A549 (cell line): ENCODE measurements at regions of chr17 and their contacts with region 1.

Region 1: DNA sequence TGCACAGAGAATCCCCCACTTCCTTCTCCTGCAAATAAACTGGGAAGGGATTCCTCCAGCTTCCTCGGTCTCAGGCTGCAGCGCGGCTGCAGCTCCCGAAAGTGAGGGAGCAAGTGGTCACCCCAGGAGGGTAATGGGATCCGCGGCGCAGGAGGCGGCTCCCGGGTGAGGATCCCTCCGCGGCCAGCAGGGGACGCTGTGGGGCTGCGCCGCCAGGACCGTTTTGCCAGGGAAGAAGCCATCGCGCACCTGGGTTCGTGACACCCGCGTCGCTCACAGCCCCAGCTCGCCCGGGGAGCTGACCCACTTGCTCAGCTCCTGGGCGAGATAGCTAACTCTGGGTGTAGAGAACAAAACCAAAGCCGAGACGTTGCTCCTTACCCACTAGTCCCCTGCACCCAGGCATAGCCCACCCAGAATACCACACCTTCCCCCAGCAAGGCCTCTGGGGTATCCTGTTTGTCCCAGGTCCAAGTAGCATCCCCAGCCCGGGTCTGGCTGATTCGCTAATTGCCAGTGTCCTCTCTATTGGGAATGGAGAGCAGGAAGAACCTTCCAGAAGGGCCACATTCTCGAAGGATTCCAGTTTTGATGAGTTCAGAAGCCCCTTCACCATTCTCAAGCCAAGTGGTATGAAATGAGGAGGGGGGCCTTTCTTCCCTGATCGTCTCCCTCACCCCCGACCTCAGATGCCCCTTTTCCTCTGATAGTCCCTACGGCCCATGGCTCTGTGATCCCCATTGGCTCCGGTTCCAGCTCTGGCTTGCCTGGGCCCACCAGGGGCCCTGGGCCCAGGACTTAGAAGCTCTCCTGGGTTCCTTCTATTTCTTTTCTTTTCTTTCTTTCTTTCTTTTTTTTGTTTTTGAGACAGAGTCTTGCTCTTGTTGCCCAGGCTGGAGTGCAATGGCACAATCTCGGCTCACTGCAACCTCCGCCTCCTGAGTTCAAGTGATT is 14.1 kb downstream of the CYGB start:
- DNase-seq: peak; percentile 75 to 93
- ATAC-seq: peak; percentile 79 to 88
- H3K4me3 ChIP-seq: no peak overlapping the region
- H3K27ac ChIP-seq: peak overlapping the region in 1 of 2 experiments; percentile 47; a peak in 1 of 6 replicates
- H3K4me1 ChIP-seq: peaks cover 20% of the 10 kb centered on the region
- CTCF ChIP-seq: peak; percentile 100
- EP300 ChIP-seq: no peak
- POLR2A ChIP-seq: no peak
- RAD21 ChIP-seq: peak; percentile 97 to 99

Region 2: DNA sequence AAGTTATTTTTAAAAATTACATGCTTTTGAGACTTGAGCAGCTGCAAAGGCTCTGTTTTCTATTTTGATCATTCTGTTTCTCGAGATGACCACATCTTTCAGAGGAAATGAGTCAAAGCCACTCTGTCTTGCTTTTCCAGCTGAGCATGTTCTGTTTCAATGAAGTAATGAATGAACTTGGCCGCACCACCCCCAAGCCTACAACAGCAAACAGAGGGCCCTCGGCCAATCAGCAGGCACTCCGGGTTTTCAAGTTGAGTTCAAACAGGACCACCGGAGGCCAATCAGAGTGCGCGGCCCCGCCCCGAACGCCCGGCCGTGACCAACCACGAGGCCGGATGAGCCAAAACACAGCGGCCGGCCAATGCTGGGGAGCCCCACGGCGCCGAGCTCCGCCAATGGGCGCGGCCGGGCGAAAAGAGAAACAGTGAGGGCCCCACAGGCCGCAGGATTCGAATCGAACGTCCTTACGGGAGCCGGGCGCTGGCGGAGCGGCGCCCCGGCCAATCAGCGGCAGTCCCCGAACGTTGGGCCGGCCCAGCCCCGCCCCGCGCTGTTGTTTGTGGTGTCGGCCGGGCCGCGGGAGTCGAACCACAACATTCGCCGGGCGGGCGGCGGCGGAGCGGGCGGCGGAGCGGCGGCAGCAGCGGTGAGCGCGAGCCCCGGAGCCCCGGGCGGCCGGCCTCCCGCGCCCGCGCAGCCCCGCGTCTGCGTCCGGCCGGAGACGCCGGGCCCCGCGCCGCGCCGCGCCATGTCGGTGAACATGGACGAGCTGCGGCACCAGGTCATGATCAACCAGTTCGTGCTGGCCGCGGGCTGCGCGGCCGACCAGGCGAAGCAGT is 258.4 kb before region 1 on chr17 and contains the start of gene UBALD2:
- CTCF ChIA-PET with region 1: no interaction called
- POLR2A ChIA-PET with region 1: no interaction called
- DNase-seq: peak; percentile 100
- ATAC-seq: peak; percentile 92 to 98
- H3K4me3 ChIP-seq: peak within 1 kb of the TSS; percentile 99
- H3K27ac ChIP-seq: peak within 1 kb of the TSS; percentile 89 to 92
- H3K4me1 ChIP-seq: peaks cover 25% of the 10 kb centered on the region
- CTCF ChIP-seq: no peak
- EP300 ChIP-seq: no peak
- POLR2A ChIP-seq: peak; percentile 21; the same call in 1 of the 2 replicates
- RAD21 ChIP-seq: no peak
- polyA plus RNA-seq, gene UBALD2: 13.8 and 21.5 TPM in 2 replicates

Region 3: GRCh38 chr17:76278952-76279741 is 244.2 kb before region 1 on chr17:
- CTCF ChIA-PET with region 1: no interaction called
- POLR2A ChIA-PET with region 1: no interaction called
- DNase-seq: peak; percentile 78 to 96
- ATAC-seq: peak; percentile 75 to 97
- H3K4me3 ChIP-seq: no peak overlapping the region
- H3K27ac ChIP-seq: peak overlapping the region; percentile 3; a peak in 2 of 6 replicates
- H3K4me1 ChIP-seq: peaks cover 10% of the 10 kb centered on the region
- CTCF ChIP-seq: peak; percentile 100
- EP300 ChIP-seq: no peak
- POLR2A ChIP-seq: no peak
- RAD21 ChIP-seq: peak; percentile 99

Region 4: GRCh38 chr17:76365256-76365903 is 158.0 kb before region 1 on chr17:
- CTCF ChIA-PET with region 1: no interaction called
- POLR2A ChIA-PET with region 1: no interaction called
- DNase-seq: no peak
- ATAC-seq: peak; percentile 48 to 79; a peak in 3 of 6 replicates
- H3K4me3 ChIP-seq: no peak overlapping the region
- H3K27ac ChIP-seq: no peak overlapping the region
- H3K4me1 ChIP-seq: no peaks in the 10 kb centered on the region
- CTCF ChIP-seq: peak; percentile 58
- EP300 ChIP-seq: no peak
- POLR2A ChIP-seq: no peak
- RAD21 ChIP-seq: peak in 1 of 2 experiments; percentile 58; a peak in 2 of 5 replicates

Region 5: DNA sequence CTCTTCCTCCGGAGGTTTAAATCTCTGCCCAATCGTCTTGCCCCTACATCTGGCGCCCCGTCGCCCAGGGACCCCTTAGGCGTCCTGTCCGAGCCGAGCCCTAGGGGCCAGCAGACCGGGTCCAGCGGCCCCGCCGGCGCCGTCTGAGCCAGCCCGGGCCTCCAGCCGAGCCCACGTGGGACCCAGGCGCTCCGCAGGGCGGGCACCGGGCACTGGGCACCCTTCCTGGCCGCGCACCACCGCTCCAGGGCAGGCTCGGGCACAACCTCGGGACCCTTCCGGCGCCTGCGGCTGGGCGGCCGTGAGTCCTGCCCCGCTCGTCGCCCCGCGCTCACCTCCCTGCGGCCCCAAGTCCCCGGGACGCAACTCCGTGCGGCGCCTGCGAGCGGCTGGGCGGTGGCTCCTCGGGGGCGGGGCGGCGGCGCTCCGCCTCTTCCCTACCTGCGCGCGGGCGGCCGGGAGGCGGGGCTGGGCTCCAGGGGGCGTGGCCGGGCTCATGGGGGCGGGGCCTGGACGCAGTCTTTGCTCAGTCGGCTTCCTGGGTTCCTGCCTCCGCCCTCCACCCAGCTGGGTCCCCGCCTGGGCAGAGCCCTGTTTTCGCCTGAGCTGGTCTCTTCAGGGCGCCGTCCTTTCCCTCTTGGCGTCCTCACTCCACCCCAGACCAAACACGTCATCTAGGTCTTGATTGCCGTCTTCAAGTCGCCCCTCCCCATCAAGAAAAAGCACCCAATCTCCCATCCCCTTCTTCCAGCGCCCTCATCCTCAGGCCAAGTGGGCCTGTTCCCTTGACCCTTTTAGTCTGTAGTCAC is 22.1 kb before region 1 on chr17 and contains the start of gene RHBDF2:
- CTCF ChIA-PET with region 1: interaction called, 199 read pairs
- POLR2A ChIA-PET with region 1: interaction called, 6 read pairs
- DNase-seq: peak; percentile 87 to 97
- ATAC-seq: peak; percentile 73 to 81
- H3K4me3 ChIP-seq: peak within 1 kb of the TSS; percentile 81
- H3K27ac ChIP-seq: peak within 1 kb of the TSS; percentile 83 to 96
- H3K4me1 ChIP-seq: peaks cover 41% of the 10 kb centered on the region
- CTCF ChIP-seq: no peak
- EP300 ChIP-seq: no peak
- POLR2A ChIP-seq: peak; percentile 82
- RAD21 ChIP-seq: no peak
- polyA plus RNA-seq, gene RHBDF2: 14.0 and 19.9 TPM in 2 replicates

Region 6: GRCh38 chr17:76557368-76558197 is 34.2 kb after region 1 on chr17:
- CTCF ChIA-PET with region 1: interaction called, 185 read pairs
- POLR2A ChIA-PET with region 1: interaction called, 3 read pairs
- DNase-seq: peak; percentile 84 to 99
- ATAC-seq: peak; percentile 96
- H3K4me3 ChIP-seq: peak overlapping the region; percentile 87
- H3K27ac ChIP-seq: peak overlapping the region; percentile 90 to 96
- H3K4me1 ChIP-seq: peaks cover 39% of the 10 kb centered on the region
- CTCF ChIP-seq: peak; percentile 54
- EP300 ChIP-seq: no peak
- POLR2A ChIP-seq: peak; percentile 99
- RAD21 ChIP-seq: no peak; a peak in 1 of 5 replicates

Region 7: DNA sequence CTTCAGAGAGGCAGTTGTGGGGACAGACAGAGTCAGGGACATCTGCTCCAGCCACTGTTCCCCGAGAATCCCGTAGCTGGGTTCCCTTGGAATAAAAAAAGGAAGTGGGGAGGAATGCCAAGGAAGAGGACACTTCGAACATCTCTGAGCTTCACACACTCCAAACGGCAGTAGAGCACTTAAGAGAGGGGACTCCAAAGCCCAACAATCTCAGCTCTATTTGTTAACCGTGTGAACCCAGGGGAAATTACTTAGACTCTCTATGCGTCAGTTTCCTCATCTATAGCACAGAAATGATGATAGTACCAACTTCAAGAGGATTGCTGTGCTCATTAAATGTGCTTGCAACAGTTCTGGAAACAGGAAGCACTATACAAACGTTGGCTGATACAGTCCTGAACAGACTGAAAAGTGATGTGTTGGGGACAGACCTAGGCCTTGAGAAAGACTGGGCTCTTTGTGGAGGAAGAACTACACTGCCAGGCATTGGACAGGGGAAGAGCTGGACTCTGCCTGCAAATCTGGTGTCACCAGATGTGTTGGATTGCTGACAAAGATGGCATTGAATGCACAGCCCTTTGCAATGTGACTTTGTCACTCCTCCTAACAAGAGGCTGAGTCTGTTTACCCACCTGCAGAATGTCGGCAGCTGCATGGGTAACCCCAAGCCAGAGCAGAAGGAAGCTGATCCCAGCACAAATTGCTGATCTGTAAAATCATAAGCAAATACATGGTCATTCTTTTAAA is 74.5 kb after region 1 on chr17:
- CTCF ChIA-PET with region 1: interaction called, 25 read pairs
- POLR2A ChIA-PET with region 1: no interaction called
- DNase-seq: no peak
- ATAC-seq: peak; percentile 29 to 36; a peak in 4 of 6 replicates
- H3K4me3 ChIP-seq: no peak overlapping the region
- H3K27ac ChIP-seq: no peak overlapping the region
- H3K4me1 ChIP-seq: peaks cover 8% of the 10 kb centered on the region; the same call in 2 of the 3 replicates
- CTCF ChIP-seq: no peak
- EP300 ChIP-seq: no peak
- POLR2A ChIP-seq: no peak
- RAD21 ChIP-seq: no peak

Region 8: DNA sequence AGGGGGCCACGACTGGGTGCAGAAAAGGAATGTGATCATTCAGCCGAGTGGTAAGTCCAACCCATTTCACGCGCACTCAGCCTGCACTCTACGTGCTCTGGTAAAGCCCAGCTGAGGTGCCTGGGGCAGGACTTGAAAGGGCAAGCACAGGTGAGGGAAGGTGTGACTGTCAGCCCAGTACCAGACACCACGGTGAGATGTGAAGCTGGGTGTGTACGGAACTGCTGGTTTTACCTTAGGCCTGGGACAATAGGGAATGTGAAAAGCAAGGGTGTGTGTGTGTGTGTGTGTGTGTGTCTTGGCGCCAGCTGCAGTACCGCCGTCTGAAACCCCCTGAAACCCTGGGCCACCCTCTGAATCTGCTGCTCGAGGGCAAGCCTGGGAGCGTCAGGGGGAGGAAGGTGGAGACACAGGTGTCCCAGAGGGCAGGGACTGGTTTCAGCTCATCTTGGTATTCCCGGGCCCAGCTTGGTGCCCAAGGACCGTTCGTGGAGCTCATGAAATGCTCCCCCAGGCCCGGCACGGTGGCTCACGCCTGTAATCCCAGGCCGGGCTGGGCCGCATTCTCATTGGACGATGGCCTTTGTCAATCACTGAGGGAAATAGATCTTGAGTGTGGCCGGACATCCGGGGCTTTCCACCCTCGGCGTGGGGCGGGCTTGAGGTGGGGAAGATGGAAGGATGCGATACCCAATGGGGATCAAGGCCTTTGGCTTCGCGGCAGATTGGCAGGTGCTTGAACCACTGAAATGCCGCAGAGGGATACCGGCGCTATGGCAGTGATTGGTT is 148.0 kb after region 1 on chr17:
- CTCF ChIA-PET with region 1: interaction called, 23 read pairs
- POLR2A ChIA-PET with region 1: no interaction called
- DNase-seq: peak; percentile 100
- ATAC-seq: peak; percentile 97 to 99
- H3K4me3 ChIP-seq: peak overlapping the region; percentile 54
- H3K27ac ChIP-seq: peak overlapping the region; percentile 85 to 91
- H3K4me1 ChIP-seq: peaks cover 15% of the 10 kb centered on the region
- CTCF ChIP-seq: no peak
- EP300 ChIP-seq: no peak
- POLR2A ChIP-seq: peak; percentile 66
- RAD21 ChIP-seq: no peak

Region 9: GRCh38 chr17:76726231-76726775 is 202.9 kb after region 1 on chr17 and contains the start of gene JMJD6:
- CTCF ChIA-PET with region 1: interaction called, 192 read pairs
- POLR2A ChIA-PET with region 1: no interaction called
- DNase-seq: peak; percentile 98 to 99
- ATAC-seq: peak; percentile 84 to 91
- H3K4me3 ChIP-seq: peak within 1 kb of the TSS; percentile 97
- H3K27ac ChIP-seq: peak within 1 kb of the TSS; percentile 93 to 99
- H3K4me1 ChIP-seq: peaks cover 17% of the 10 kb centered on the region
- CTCF ChIP-seq: no peak
- EP300 ChIP-seq: no peak
- POLR2A ChIP-seq: peak; percentile 90
- RAD21 ChIP-seq: no peak
- polyA plus RNA-seq, gene JMJD6: 17.5 and 23.0 TPM in 2 replicates